Heart right ventricle (tissue), 16 donors: ENCODE measurements at regions of chr19 and their contacts with region 1.

Region 1: DNA sequence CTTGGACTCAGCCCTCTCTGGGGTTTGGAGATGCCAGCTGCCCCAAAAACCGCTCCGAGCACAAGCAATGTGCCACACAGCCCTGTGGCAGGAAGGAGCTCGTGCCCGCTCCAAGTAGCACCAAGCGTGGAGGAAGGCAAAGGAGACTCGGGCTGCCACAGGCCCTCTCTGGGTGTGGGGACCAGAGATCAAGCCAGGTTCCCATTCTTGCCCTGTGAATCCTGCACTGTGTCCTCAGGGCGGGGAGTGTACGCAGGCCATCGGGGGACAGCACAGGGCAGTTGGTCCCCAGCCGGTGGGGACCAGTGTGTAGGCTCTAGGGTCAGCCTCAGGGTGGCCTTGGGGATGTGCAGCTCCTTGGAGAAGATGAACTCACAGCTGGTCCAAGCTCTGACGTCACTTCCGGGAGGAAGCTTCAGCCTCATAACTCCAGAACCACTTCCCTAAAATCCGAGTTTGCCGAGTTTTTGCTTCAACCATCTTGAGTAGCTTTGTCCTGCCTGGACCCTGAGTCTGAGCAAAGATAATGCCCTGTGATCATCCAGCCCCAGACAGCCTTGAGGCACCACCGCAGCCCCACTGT is 9.3 kb upstream of the CPAMD8 start:
- DNase-seq: peak in 1 of 2 donors; percentile 30
- ATAC-seq: peak in 6 of 8 donors; percentile 9 to 46 (median 31)
- H3K4me3 ChIP-seq: no peak overlapping the region
- H3K27ac ChIP-seq: no peak overlapping the region
- H3K4me1 ChIP-seq: no peaks in the 10 kb centered on the region
- H3K27me3 ChIP-seq: peaks cover 0 to 7% (median 2%) of the 10 kb centered on the region in 7 donors
- CTCF ChIP-seq: no peak

Region 2: DNA sequence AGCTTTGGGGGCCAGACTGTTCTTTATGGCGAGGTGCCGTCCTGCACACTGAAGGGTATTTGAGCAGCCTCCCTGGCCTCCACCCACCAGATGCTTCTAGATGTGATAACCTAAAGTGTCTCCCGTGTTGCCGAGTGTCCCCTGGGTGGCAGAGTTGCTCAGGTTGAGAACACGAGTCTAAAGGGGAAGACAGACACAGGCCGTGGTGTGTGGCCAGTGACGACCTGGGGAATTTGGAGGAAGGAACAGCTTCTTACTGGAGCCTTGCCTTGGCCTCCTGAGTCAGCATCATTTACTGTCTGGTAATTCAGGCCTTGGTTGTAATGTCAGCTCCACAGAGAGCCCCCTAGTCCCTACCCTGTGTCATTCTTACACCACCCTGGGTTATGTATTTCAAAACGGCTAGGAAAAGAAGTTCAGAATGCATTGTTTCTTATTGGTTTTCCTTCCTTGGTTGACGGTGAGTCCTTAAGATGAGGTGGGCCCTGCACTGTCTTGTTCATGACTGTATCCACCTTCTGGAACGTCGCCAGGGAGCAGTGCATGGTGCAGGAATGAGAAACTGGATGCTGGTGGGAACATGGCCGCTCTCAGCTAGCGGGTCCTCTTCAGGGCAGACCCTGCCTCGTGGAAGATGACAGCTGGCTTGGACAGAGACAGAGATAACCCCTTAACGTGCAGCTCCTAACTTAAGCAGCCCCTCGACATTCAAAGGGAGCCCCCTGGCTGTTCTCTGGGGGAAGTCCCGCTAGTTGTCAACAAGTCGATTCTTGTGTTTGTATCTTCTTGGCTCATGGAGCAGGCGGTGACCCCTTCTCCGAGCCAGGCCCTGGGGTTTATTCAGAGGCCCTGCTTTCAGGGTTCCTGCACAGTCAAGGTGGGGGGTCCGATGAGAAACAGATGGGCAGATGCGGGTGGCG is 199.6 kb before region 1 on chr19:
- intact Hi-C with region 1: no loop called
- DNase-seq: no peak
- ATAC-seq: peak; percentile 31 to 72 (median 48)
- H3K4me3 ChIP-seq: no peak overlapping the region
- H3K27ac ChIP-seq: no peak overlapping the region
- H3K4me1 ChIP-seq: peaks cover 0 to 26% (median 1%) of the 10 kb centered on the region in 9 donors
- H3K27me3 ChIP-seq: no peaks in the 10 kb centered on the region
- CTCF ChIP-seq: peak in 2 of 9 donors; percentile 22 to 28

Region 3: GRCh38 chr19:16910750-16911445 is 125.0 kb before region 1 on chr19:
- intact Hi-C with region 1: loop called in 1 of 10 experiments (anchors 10 kb)
- DNase-seq: no peak
- ATAC-seq: no peak
- H3K4me3 ChIP-seq: no peak overlapping the region
- H3K27ac ChIP-seq: no peak overlapping the region
- H3K4me1 ChIP-seq: no peaks in the 10 kb centered on the region
- H3K27me3 ChIP-seq: no peaks in the 10 kb centered on the region
- CTCF ChIP-seq: no peak